ENCODE measurements at regions of chr1 and their contacts with region 1.

Region 1: DNA sequence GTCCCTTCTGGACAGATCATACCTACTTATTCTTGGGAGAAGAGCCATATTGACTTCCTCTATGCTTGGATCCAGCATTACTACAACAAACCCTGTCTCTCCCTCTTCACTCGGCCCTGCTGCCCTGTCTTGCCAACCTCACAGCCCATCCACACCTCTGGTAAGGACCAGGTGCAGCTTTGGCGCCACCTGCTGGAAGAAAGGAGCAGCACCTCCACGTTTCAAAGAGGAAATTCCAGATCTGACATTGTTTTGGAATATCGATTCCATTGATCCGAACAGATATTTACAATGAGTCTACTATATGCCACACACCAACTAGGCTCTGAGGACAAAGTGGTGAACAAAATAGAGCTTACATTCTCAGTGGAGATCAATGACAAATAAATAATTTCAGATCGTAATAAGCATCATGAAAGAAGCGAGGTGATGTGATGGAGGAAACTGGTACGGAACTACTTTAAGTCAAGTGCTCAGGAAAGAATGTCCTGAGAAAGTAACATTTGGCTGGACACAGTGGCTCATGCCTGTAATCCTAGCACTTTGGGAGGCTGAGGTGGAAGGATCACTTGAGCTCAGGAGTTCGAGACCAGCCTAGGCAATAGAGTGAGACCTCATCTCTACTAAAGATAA is 18.7 kb downstream of the MFSD2A start:
- DNase-seq: peak; percentile 79 to 92
- ATAC-seq: peak; percentile 87
- H3K4me3 ChIP-seq: no peak overlapping the region
- H3K27ac ChIP-seq: no peak overlapping the region
- H3K4me1 ChIP-seq: no peaks in the 10 kb centered on the region
- H3K27me3 ChIP-seq: no peaks in the 10 kb centered on the region

Region 2: GRCh38 chr1:39683591-39684312 is 289.9 kb before region 1 on chr1:
- intact Hi-C with region 1: no loop called
- DNase-seq: peak in 1 of 2 donors; percentile 64
- ATAC-seq: peak; percentile 27
- H3K4me3 ChIP-seq: no peak overlapping the region
- H3K27ac ChIP-seq: no peak overlapping the region
- H3K4me1 ChIP-seq: no peaks in the 10 kb centered on the region
- H3K27me3 ChIP-seq: no peaks in the 10 kb centered on the region

Region 3: GRCh38 chr1:39926343-39926793 is 47.3 kb before region 1 on chr1:
- intact Hi-C with region 1: loop called in 1 of 2 experiments (anchors 5 kb)
- DNase-seq: no peak
- ATAC-seq: no peak
- H3K4me3 ChIP-seq: no peak overlapping the region
- H3K27ac ChIP-seq: no peak overlapping the region
- H3K4me1 ChIP-seq: no peaks in the 10 kb centered on the region
- H3K27me3 ChIP-seq: no peaks in the 10 kb centered on the region

Region 4: GRCh38 chr1:39988618-39989351 is 15.2 kb after region 1 on chr1:
- intact Hi-C with region 1: no loop called
- DNase-seq: no peak
- ATAC-seq: no peak
- H3K4me3 ChIP-seq: no peak overlapping the region
- H3K27ac ChIP-seq: no peak overlapping the region
- H3K4me1 ChIP-seq: no peaks in the 10 kb centered on the region
- H3K27me3 ChIP-seq: no peaks in the 10 kb centered on the region

Measured in aorta (tissue), 5 donors.